Psoas muscle (tissue), 8 donors: ENCODE measurements at regions of chr22 and their contacts with region 1.

Region 1: DNA sequence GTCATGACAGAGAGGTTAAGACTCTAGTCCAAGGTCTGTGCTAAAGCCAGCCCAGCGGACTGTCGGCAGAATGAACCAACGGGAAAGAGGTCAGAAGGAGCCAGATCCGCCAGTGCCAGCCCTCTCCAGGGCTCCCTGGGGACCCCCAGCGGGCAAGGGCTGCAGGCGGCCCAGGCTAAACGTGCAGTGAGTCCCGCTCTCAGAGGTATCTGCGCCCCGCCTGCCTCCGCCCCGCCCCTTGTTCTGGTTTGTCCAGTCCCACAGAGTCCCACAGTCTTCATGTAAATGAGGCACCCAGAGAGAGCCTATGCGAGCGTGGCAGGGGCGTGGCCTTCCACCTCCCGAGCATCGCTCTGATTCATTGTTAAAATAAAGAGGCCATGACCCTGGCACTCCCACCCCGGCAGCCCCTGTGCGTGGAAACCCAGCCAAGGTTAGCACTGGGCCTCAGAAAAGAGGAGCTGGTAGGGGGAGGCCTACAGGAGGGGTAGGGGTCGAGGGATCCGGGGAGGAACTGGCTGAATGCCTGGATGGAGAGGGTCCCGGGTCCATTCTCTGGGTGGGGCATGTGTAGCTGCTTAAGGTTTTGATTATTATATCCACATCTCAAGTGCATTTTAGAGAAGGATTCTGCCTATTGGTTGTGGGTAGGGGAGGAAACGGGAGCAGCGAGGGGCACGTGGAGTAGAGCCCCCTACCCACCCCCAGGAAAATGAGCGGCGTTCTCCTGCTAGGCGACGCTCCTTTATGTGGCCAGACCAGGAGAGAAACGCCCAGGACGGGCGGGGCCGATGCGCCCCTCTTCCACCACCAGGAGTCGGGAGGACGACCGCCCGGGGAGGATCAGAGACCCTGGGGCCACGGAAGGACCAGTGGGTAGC is at the start of gene TRIOBP:
- DNase-seq: peak; percentile 95 to 97
- ATAC-seq: peak; percentile 96 to 98 (median 97)
- H3K4me3 ChIP-seq: peak within 1 kb of the TSS; percentile 38
- H3K27ac ChIP-seq: no peak within 1 kb of the TSS
- H3K4me1 ChIP-seq: peaks cover 12% of the 10 kb centered on the region
- H3K27me3 ChIP-seq: no peaks in the 10 kb centered on the region
- CTCF ChIP-seq: peak; percentile 44
- total RNA-seq, gene TRIOBP: 22.1 to 34.6 (median 24.5) TPM

Region 2: DNA sequence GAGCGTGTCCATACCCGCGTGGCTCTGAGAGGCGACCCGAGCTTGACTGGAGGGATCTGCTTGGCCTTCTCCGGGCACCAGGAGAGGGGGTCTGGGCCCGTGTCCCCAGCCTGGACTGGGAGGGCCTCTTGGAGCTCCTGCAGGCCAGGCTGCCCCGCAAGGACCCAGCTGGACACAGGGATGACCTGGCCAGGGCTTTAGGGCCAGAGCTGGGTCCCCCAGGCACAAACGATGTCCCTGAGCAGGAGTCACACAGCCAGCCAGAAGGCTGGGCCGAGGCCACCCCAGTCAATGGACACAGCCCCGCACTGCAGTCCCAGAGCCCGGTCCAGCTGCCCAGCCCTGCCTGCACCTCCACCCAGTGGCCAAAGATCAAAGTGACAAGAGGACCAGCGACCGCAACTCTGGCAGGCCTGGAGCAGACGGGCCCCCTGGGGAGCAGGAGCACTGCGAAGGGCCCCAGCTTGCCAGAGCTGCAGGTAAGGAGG is 38.1 kb after region 1 on chr22:
- intact Hi-C with region 1: loop called (anchors 5 kb)
- DNase-seq: peak; percentile 65 to 79
- ATAC-seq: peak; percentile 79 to 82 (median 80)
- H3K4me3 ChIP-seq: no peak overlapping the region
- H3K27ac ChIP-seq: no peak overlapping the region
- H3K4me1 ChIP-seq: no peaks in the 10 kb centered on the region
- H3K27me3 ChIP-seq: peaks cover 0 to 5% (median 4%) of the 10 kb centered on the region in 3 donors
- CTCF ChIP-seq: peak; percentile 48

Region 3: DNA sequence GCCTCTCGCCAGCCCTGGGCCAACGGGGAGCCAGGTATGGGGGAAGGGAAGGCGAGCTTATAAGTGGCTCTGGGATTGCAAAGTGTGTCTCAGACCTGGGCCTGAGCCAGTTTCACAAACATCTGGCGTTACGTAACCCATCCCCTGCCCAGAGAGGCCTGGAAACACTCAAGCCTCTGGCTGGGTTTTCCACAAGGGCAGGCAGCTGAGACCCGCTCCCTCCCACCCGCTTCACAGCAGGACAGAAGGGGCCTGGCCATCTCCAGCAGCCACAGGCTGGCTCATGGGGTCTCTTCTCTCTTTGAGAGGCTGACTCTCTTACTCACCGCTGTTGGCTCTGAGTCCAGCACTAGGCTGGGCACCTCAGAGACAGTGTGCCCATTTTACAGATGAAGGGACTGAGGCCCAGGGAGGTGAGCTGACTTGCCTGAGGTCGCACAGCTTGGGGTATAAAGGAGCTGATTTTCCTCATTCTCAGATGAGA is 44.5 kb after region 1 on chr22:
- intact Hi-C with region 1: loop called (anchors 5 kb)
- DNase-seq: peak; percentile 82 to 89
- ATAC-seq: peak in 3 of 4 donors; percentile 10 to 35 (median 21)
- H3K4me3 ChIP-seq: no peak overlapping the region
- H3K27ac ChIP-seq: no peak overlapping the region
- H3K4me1 ChIP-seq: no peaks in the 10 kb centered on the region
- H3K27me3 ChIP-seq: peaks cover 0 to 5% (median 4%) of the 10 kb centered on the region in 3 donors
- CTCF ChIP-seq: no peak

Region 4: GRCh38 chr22:37855462-37855861 is 158.6 kb after region 1 on chr22:
- intact Hi-C with region 1: no loop called
- DNase-seq: no peak
- ATAC-seq: peak in 1 of 4 donors; percentile 29
- H3K4me3 ChIP-seq: no peak overlapping the region
- H3K27ac ChIP-seq: peak overlapping the region; percentile 55
- H3K4me1 ChIP-seq: peaks cover 24% of the 10 kb centered on the region
- H3K27me3 ChIP-seq: no peaks in the 10 kb centered on the region
- CTCF ChIP-seq: no peak